ENCODE measurements at regions of chr21 and their contacts with region 1.

Region 1: DNA sequence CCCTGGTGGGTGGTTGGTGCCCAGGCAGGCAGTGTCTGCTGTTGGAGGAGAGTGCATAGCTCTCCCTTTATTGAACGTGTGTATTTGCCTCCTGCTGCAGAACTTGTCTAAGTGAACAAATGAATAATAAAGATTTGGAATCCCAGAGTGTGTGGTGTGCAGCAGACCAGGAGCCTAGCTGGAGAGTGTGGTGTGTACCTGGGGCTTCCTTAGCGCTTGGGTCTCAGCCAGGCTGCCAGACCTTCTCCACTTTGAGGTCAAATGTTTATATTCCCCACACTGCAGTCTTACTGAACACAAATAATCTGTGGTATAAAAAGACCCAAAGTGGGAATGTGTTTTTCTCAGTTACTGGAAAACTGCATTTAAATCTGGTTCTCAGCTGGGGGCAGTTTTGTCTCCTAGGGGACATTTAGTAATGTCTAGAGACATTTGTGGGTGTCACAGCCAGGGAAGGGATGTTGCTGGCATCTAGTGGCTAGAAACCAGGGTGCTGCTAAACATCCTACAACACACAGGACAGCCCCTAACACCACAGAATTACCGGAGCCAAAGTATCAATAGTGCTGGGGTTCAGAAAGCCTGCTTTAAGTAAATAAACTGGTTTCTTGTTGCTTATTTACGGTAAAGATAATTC is 23.6 kb downstream of the SLC37A1 start:
- DNase-seq: no peak
- H3K4me3 Mint-ChIP-seq: no peak overlapping the region
- H3K27ac Mint-ChIP-seq: no peak overlapping the region
- H3K4me1 Mint-ChIP-seq: no peaks in the 10 kb centered on the region
- H3K27me3 Mint-ChIP-seq: no peaks in the 10 kb centered on the region

Region 2: GRCh38 chr21:42467140-42467983 is 69.9 kb before region 1 on chr21:
- intact Hi-C with region 1: loop called (anchors 1 kb)
- DNase-seq: no peak
- H3K4me3 Mint-ChIP-seq: no peak overlapping the region
- H3K27ac Mint-ChIP-seq: no peak overlapping the region
- H3K4me1 Mint-ChIP-seq: peaks cover 48% of the 10 kb centered on the region
- H3K27me3 Mint-ChIP-seq: peaks cover 8% of the 10 kb centered on the region

Region 3: DNA sequence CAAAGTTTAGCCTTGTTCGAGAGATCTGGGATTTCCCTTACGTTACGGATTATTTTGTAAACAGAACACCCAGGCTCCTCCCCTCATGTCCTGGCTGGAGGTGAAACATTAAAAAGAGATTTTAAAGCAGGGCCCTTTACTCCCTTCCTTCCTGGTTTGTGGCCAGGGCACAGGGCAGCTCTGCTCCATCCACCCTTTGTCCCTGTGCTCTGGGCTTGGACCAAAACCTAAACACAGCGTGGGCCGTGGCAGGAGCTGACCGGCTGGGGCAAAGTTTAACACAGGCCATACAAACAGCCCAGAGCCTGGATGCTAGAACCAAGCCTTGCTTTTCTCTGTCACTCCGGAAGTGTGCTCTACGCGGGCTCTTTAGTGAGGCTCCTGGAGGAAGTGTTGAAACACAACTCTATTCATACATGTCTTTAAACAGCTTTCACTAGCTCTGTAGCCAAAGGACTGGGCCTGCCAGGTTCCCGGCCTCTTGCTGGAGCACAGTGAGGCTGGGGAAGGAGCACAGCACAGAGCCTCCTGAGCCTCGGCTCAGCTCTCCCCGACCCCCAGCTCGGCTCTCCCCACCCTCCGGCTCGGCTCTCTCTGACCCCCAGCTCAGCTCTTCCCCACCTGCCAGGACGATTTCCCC is 200.8 kb after region 1 on chr21:
- intact Hi-C with region 1: no loop called
- DNase-seq: peak; percentile 8
- H3K4me3 Mint-ChIP-seq: peak overlapping the region; percentile 77
- H3K27ac Mint-ChIP-seq: peak overlapping the region; percentile 98
- H3K4me1 Mint-ChIP-seq: peaks cover 57% of the 10 kb centered on the region
- H3K27me3 Mint-ChIP-seq: peaks cover 2% of the 10 kb centered on the region

Measured in activated T-helper 1 cell treated with anti-CD3 and anti-CD28 coated beads, Interleukin-12 subunit alpha, Interleukin-12 subunit beta, Interleukin-2, Interleukin-4 antibody, amounts not matched to agents 30 ng/mL and 10 ng/mL and 1 ng/mL, durations not matched to agents 14 hours and 24 hours and 36 hours (primary cell).